Activated CD4-positive, alpha-beta T cell treated with anti-CD3 and anti-CD28 coated beads for 36 hours (primary cell): ENCODE measurements at regions of chr4 and their contacts with region 1.

Region 1: DNA sequence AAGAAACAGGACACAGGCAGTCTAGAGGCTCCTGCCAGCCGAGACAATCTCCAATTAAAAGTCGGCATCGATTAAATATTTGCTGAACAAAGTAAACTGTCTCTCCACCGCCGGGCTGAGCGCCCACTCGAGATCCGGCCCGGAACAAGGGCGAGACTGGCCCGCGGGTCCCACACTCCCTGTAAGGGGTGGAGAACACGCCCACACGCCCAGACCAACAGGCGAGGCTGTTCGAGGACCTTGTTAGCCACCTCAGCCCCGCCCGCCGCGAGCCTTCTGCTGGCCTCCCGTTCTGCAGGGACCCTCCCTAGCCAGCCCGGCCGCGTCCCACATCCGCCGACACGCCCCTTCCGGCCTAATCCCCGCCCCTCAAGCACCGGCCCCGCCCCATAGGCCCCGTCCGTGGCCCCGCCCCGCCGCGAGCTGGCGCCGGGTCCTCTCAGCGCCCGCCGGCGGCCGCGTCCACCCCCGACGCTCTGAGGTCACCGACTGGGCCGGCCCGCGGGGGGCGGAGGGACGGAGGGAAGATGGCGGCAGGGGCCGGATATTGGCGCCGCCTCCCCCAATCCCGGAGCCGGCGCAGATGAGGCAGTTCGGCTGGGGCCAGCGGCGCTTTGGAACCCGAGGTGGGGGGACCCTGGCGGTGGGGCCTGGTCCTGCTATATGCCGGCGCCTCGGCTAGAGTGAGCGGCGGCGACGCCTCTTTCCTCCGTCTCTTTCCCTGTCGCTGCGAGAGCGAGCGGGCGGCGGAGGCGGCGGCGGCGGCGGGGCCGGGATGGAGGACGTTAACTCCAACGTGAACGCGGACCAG is at the start of gene SLAIN2:
- DNase-seq: peak; percentile 99
- ATAC-seq: peak; percentile 85
- H3K4me3 Mint-ChIP-seq: peak within 1 kb of the TSS; percentile 98
- H3K27ac Mint-ChIP-seq: peak within 1 kb of the TSS; percentile 98
- H3K4me1 Mint-ChIP-seq: peaks cover 62% of the 10 kb centered on the region
- H3K27me3 Mint-ChIP-seq: no peaks in the 10 kb centered on the region
- total RNA-seq, gene SLAIN2: 55.7 to 140 TPM

Region 2: DNA sequence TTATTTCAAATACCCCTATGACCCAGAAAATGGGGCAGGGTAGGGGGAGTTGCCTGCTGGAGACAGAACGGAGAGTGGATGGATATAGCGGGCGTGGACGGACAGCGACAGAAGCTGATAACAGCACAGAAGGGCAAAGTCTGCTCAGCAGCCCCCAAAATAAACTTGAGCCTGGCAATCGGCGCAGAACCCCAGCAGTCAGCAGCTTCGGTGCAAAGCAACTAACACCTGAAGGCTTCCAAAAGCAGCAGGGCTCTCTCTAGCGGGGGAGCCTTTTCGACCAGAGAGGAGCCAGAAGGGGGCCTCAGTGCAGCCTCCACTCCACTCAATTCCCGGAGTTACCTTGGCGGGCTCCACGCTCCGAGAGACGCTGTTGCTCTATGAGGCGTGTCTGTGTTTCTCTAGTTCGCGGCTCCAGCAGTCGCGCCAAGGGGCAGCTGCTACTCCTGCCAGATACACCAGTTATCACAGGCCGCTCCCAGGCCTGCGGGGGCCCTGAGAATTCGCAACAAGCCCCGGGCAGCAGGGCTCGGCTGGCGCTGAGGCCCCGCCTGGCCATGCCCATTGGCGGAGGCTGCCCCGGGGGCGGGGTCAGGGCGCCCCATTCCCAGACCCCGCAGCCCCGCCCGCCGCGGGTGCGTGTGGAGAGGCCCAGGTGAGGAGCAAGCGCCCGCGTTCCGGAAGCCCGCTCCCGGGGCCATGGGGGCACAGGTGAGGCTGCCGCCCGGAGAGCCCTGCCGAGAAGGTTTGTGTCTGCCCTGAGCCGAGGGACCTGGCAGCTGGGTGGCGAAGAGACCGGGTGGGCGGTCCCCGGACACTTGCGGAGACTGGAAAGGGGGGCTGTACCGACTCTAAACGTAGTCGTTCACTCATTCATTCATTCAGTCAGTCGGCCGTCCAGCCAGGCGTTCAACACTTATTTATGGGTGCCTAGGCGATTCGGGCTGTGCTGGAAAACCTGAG is 324.7 kb before region 1 on chr4 and contains the starts of genes CNGA1 and NIPAL1:
- CTCF ChIA-PET with region 1: no interaction called
- POLR2A ChIA-PET with region 1: no interaction called
- intact Hi-C with region 1: loop called in 1 of 2 experiments (anchors 2 kb)
- DNase-seq: peak; percentile 80
- ATAC-seq: peak; percentile 86
- H3K4me3 Mint-ChIP-seq: peak within 1 kb of the TSS; percentile 76
- H3K27ac Mint-ChIP-seq: peak within 1 kb of the TSS; percentile 66
- H3K4me1 Mint-ChIP-seq: peaks cover 29% of the 10 kb centered on the region
- H3K27me3 Mint-ChIP-seq: peaks cover 16% of the 10 kb centered on the region
- total RNA-seq, gene CNGA1: 0.16 to 0.30 TPM
- total RNA-seq, gene NIPAL1: 1.6 to 1.8 TPM

Region 3: GRCh38 chr4:48227659-48228058 is 113.5 kb before region 1 on chr4:
- CTCF ChIA-PET with region 1: no interaction called
- POLR2A ChIA-PET with region 1: no interaction called
- intact Hi-C with region 1: no loop called
- DNase-seq: no peak
- ATAC-seq: no peak
- H3K4me3 Mint-ChIP-seq: no peak overlapping the region
- H3K27ac Mint-ChIP-seq: no peak overlapping the region
- H3K4me1 Mint-ChIP-seq: peaks cover 4% of the 10 kb centered on the region
- H3K27me3 Mint-ChIP-seq: no peaks in the 10 kb centered on the region

Region 4: DNA sequence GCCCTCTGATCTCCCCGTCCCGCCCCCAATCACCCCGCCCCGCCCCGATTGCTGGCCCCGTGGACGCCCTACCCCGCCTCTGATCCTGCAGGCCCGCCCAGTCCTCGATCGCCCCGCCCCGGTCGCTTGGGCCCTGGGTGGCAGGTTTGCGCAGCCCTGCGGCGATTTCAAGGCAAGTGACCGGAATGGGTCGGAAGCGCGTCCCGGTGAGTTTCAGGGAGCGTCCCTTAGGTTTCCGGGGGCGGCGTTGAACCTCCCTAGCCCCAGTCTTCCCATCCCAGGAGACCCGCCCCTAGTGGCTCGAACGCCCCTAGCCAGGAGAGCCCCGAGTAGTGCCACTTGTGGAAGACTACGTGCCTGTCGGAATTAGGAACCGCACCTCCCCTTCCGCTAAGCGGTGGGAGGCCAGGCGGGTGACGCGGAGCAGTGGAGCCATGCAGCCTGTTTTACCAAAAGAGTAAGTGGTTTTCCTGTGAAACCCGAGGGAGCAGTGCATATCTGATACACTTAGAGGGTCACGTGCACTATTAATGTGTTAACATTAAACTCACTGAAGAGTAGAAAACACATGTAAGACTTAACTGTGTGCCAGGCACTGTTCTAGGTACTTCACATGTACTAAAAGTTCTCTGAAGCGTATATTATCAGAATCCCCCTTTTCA is 71.2 kb before region 1 on chr4:
- CTCF ChIA-PET with region 1: interaction called, 3 read pairs
- POLR2A ChIA-PET with region 1: no interaction called
- intact Hi-C with region 1: loop called (anchors 1 kb)
- DNase-seq: peak; percentile 97
- ATAC-seq: peak; percentile 95
- H3K4me3 Mint-ChIP-seq: peak overlapping the region; percentile 89
- H3K27ac Mint-ChIP-seq: peak overlapping the region; percentile 93
- H3K4me1 Mint-ChIP-seq: peaks cover 17% of the 10 kb centered on the region
- H3K27me3 Mint-ChIP-seq: no peaks in the 10 kb centered on the region

Region 5: GRCh38 chr4:48329193-48329592 is 12.0 kb before region 1 on chr4:
- CTCF ChIA-PET with region 1: interaction called, 11 read pairs
- POLR2A ChIA-PET with region 1: interaction called, 3 read pairs
- intact Hi-C with region 1: no loop called
- DNase-seq: no peak
- ATAC-seq: no peak
- H3K4me3 Mint-ChIP-seq: no peak overlapping the region
- H3K27ac Mint-ChIP-seq: no peak overlapping the region
- H3K4me1 Mint-ChIP-seq: peaks cover 8% of the 10 kb centered on the region
- H3K27me3 Mint-ChIP-seq: peaks cover 10% of the 10 kb centered on the region

Region 6: GRCh38 chr4:48499551-48500066 is 158.4 kb after region 1 on chr4:
- CTCF ChIA-PET with region 1: no interaction called
- POLR2A ChIA-PET with region 1: no interaction called
- intact Hi-C with region 1: loop called in 1 of 2 experiments (anchors 5 kb)
- DNase-seq: no peak
- ATAC-seq: peak; percentile 73
- H3K4me3 Mint-ChIP-seq: no peak overlapping the region
- H3K27ac Mint-ChIP-seq: no peak overlapping the region
- H3K4me1 Mint-ChIP-seq: peaks cover 17% of the 10 kb centered on the region
- H3K27me3 Mint-ChIP-seq: no peaks in the 10 kb centered on the region

Region 7: DNA sequence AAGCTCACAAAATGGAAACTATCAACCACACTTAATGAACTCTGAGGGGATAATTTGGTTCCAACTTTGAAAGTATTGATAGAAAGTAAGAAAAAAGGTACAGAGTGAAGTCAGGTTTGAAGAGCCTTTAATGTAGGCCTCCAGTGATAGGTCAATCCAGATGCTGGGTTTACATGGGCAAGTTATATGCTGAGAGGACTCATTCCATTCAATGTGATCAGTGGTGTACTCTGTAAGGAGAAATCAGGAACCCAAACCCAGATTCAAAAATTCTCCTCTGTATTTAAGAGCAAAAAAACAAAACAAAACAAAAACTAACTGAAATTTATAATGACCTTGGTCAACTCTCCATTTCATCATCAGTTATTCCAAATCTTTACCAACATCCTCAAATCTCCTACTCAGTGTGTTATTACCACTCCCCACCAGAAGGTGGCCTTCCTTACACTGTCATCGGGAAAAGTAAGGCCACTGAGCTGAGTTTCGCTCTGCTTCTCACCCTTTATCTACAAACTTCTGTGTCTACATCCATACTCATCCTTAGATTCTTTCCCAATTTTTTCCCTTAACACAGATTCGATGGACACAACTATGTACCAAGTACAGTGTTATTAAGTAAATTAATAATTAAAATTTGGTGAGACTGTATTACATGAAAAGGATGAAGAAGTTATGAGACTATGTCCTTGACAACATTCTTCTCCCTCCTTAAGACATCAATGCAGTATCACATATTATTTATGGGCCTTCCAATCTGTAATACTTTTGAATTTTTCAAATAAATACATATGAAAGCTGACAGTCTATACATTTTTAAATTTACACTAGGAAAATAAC is 237.2 kb after region 1 on chr4:
- CTCF ChIA-PET with region 1: no interaction called
- POLR2A ChIA-PET with region 1: no interaction called
- intact Hi-C with region 1: no loop called
- DNase-seq: peak; percentile 63
- ATAC-seq: peak; percentile 78
- H3K4me3 Mint-ChIP-seq: no peak overlapping the region
- H3K27ac Mint-ChIP-seq: no peak overlapping the region
- H3K4me1 Mint-ChIP-seq: peaks cover 4% of the 10 kb centered on the region
- H3K27me3 Mint-ChIP-seq: no peaks in the 10 kb centered on the region

Region 8: GRCh38 chr4:48830706-48831531 is 489.7 kb after region 1 on chr4 and contains the start of gene OCIAD1:
- CTCF ChIA-PET with region 1: interaction called, 3 read pairs
- POLR2A ChIA-PET with region 1: no interaction called
- intact Hi-C with region 1: loop called (anchors 1 to 5 kb)
- DNase-seq: peak; percentile 96
- ATAC-seq: peak; percentile 99
- H3K4me3 Mint-ChIP-seq: peak within 1 kb of the TSS; percentile 100
- H3K27ac Mint-ChIP-seq: peak within 1 kb of the TSS; percentile 100
- H3K4me1 Mint-ChIP-seq: peaks cover 23% of the 10 kb centered on the region
- H3K27me3 Mint-ChIP-seq: no peaks in the 10 kb centered on the region
- total RNA-seq, gene OCIAD1: 113 to 162 TPM

Region 9: GRCh38 chr4:48858130-48858529 is 517.0 kb after region 1 on chr4:
- CTCF ChIA-PET with region 1: no interaction called
- POLR2A ChIA-PET with region 1: no interaction called
- intact Hi-C with region 1: no loop called
- DNase-seq: no peak
- ATAC-seq: peak; percentile 47
- H3K4me3 Mint-ChIP-seq: no peak overlapping the region
- H3K27ac Mint-ChIP-seq: peak overlapping the region; percentile 58
- H3K4me1 Mint-ChIP-seq: peaks cover 6% of the 10 kb centered on the region
- H3K27me3 Mint-ChIP-seq: no peaks in the 10 kb centered on the region